Posterior cingulate gyrus (tissue), 11 donors: ENCODE measurements at regions of chr2 and their contacts with region 1.

Region 1: DNA sequence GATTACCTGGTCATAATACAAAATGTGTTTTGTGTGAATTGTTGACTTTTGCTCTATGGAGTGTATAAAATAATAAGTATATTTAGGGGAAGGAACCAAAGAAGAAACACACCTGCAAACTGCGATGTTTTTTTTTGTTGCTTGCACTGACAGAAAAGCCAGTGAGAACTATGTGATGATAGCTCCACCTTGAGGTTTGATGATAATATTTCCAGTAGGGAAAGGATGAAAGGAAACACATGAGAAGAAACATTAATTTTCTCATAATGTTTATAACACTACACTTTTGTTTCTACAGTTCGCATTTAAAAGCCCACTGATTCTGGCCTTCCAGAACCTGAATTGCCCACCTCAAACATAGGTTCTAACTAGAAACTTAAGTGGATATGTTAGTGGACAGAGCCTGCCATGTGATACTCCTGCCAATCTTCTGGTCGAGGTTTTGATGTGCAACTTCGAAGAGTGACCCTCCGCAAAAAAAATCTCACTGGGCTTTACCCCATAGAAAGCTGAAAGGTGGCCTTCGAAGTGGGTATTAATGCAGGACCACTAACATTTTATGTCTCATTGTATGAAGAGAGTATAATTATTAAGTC is 476.4 kb upstream of the SPHKAP start:
- DNase-seq: no peak

Region 2: GRCh38 chr2:227890495-227891079 is 767.3 kb before region 1 on chr2:
- intact Hi-C with region 1: loop called (anchors 2 kb)
- DNase-seq: no peak

Region 3: DNA sequence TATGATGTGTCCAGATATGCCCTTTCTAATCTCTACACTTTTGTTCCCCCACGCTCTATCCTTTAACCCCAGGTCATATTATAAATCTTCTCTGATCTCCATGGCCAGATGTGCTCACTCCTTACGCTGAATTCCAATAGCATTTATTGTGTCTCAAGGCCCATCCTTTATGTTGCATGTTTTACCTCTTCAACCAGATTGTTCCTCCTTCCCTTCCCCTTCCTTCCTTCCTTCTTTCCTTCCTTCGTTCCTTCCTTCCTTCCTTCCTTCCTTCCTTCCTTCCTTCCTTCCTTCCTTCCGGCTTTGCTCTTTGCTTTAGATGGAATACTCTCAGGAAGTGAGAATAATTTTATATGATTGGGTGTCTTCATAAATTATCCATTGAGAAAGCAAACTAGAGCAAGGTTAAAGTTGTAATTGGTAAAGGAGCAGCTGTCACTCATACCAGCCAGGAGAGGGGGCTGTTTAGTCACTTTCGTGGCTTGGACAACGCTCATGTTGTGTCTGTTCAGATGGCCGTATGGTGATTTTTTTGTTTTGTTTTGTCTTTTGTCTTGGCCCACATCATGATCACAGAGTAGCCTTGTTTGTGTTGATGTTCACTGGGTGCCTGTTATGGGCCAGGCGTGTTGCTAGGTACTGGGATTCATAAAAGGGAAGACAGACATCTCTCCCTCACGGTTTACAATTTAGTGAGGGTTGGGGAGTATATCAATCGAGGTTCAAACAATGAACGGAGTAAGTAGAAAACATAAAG is 718.5 kb before region 1 on chr2:
- intact Hi-C with region 1: loop called (anchors 2 kb)
- DNase-seq: peak in 7 of 10 donors; percentile 14 to 85 (median 56)

Region 4: GRCh38 chr2:228048838-228049490 is 608.9 kb before region 1 on chr2:
- intact Hi-C with region 1: loop called (anchors 5 kb)
- DNase-seq: peak in 2 of 10 donors; percentile 12 to 15

Region 5: GRCh38 chr2:229489016-229489415 is 831.1 kb after region 1 on chr2:
- intact Hi-C with region 1: no loop called
- DNase-seq: peak; percentile 37 to 96 (median 64)